ENCODE measurements at regions of chr7 and their contacts with region 1.

Region 1: GRCh38 chr7:130941322-130942210 is 207.6 kb upstream of the KLF14 start:
- DNase-seq: peak in 18 of 35 experiments; percentile 24 to 67 (median 34)
- ATAC-seq: peak in 2 of 4 experiments; percentile 15 to 29
- H3K4me3 ChIP-seq: peak overlapping the region in 1 of 2 donors; percentile 53
- H3K4me3 Mint-ChIP-seq: peak overlapping the region; percentile 84 to 87 (median 84)
- H3K27ac ChIP-seq: peak overlapping the region; percentile 90
- H3K27ac Mint-ChIP-seq: peak overlapping the region; percentile 96 to 97
- H3K4me1 ChIP-seq: peaks cover 0 to 56% of the 10 kb centered on the region in 2 experiments
- H3K4me1 Mint-ChIP-seq: peaks cover 91 to 97% (median 92%) of the 10 kb centered on the region in 3 donors
- H3K27me3 ChIP-seq: no peaks in the 10 kb centered on the region
- H3K27me3 Mint-ChIP-seq: no peaks in the 10 kb centered on the region

Region 2: GRCh38 chr7:130912862-130913631 is 28.5 kb before region 1 on chr7:
- CTCF ChIA-PET with region 1: interaction called in 1 of 2 experiments, 12 read pairs
- POLR2A ChIA-PET with region 1: interaction called, 7 to 27 read pairs
- DNase-seq: peak; percentile 25 to 90 (median 77)
- ATAC-seq: peak; percentile 89 to 94 (median 92)
- H3K4me3 ChIP-seq: peak overlapping the region; percentile 58 to 96
- H3K4me3 Mint-ChIP-seq: peak overlapping the region; percentile 82 to 86 (median 86)
- H3K27ac ChIP-seq: peak overlapping the region; percentile 89
- H3K27ac Mint-ChIP-seq: peak overlapping the region; percentile 90
- H3K4me1 ChIP-seq: peaks cover 22 to 60% of the 10 kb centered on the region in 2 experiments
- H3K4me1 Mint-ChIP-seq: peaks cover 92 to 93% (median 93%) of the 10 kb centered on the region in 3 donors
- H3K27me3 ChIP-seq: no peaks in the 10 kb centered on the region
- H3K27me3 Mint-ChIP-seq: no peaks in the 10 kb centered on the region

Region 3: GRCh38 chr7:130921391-130922180 is 20.0 kb before region 1 on chr7:
- CTCF ChIA-PET with region 1: interaction called in 1 of 2 experiments, 4 read pairs
- POLR2A ChIA-PET with region 1: interaction called, 8 to 17 read pairs
- DNase-seq: no peak
- ATAC-seq: no peak
- H3K4me3 ChIP-seq: no peak overlapping the region
- H3K4me3 Mint-ChIP-seq: no peak overlapping the region
- H3K27ac ChIP-seq: no peak overlapping the region
- H3K27ac Mint-ChIP-seq: peak overlapping the region in 1 of 2 donors; percentile 61
- H3K4me1 ChIP-seq: peaks cover 4 to 45% of the 10 kb centered on the region in 2 experiments
- H3K4me1 Mint-ChIP-seq: peaks cover 78 to 96% (median 92%) of the 10 kb centered on the region in 3 donors
- H3K27me3 ChIP-seq: no peaks in the 10 kb centered on the region
- H3K27me3 Mint-ChIP-seq: no peaks in the 10 kb centered on the region

Region 4: DNA sequence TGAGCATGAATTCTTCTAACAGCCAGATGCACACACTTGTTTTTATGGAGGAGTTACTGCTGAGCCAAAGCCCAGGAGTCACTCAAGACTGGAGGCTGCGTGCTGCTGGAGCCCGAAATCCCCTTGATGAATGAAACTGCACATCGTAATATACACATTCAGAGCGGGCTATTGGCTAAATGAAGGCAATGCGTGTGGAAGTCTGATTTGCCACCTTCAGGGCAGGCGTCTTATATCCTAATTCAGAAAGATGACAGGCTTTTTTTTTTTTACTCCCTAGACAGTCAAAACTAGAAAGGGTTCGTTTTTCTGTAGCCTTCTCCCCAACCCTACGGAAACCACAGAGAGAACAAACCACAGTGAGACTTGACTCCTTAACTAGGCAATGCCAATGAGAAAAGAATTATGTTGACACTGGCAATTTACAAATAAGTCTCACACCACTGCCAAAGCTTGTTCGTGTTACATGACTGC is 19.6 kb after region 1 on chr7:
- CTCF ChIA-PET with region 1: interaction called, 3 to 27 read pairs
- POLR2A ChIA-PET with region 1: interaction called, 8 to 92 read pairs
- DNase-seq: peak in 33 of 35 experiments; percentile 26 to 92 (median 75)
- ATAC-seq: peak; percentile 78 to 84 (median 81)
- H3K4me3 ChIP-seq: peak overlapping the region in 1 of 2 donors; percentile 45
- H3K4me3 Mint-ChIP-seq: peak overlapping the region; percentile 79 to 90 (median 87)
- H3K27ac ChIP-seq: peak overlapping the region; percentile 97
- H3K27ac Mint-ChIP-seq: peak overlapping the region; percentile 96
- H3K4me1 ChIP-seq: peaks cover 31 to 57% of the 10 kb centered on the region in 2 experiments
- H3K4me1 Mint-ChIP-seq: peaks cover 42 to 75% (median 72%) of the 10 kb centered on the region in 3 donors
- H3K27me3 ChIP-seq: no peaks in the 10 kb centered on the region
- H3K27me3 Mint-ChIP-seq: no peaks in the 10 kb centered on the region

Region 5: GRCh38 chr7:130988443-130988842 is 46.9 kb after region 1 on chr7:
- CTCF ChIA-PET with region 1: interaction called in 1 of 2 experiments, 4 read pairs
- POLR2A ChIA-PET with region 1: interaction called in 1 of 2 experiments, 18 read pairs
- DNase-seq: peak in 13 of 35 experiments; percentile 17 to 69 (median 40)
- ATAC-seq: peak in 3 of 4 experiments; percentile 12 to 49 (median 21)
- H3K4me3 ChIP-seq: no peak overlapping the region
- H3K4me3 Mint-ChIP-seq: peak overlapping the region in 2 of 3 donors; percentile 9 to 39
- H3K27ac ChIP-seq: peak overlapping the region; percentile 91
- H3K27ac Mint-ChIP-seq: peak overlapping the region; percentile 86 to 95
- H3K4me1 ChIP-seq: peaks cover 0 to 78% of the 10 kb centered on the region in 2 experiments
- H3K4me1 Mint-ChIP-seq: peaks cover 75 to 92% (median 90%) of the 10 kb centered on the region in 3 donors
- H3K27me3 ChIP-seq: no peaks in the 10 kb centered on the region
- H3K27me3 Mint-ChIP-seq: no peaks in the 10 kb centered on the region

Measured in T-cell (primary cell).